Activated T-helper 1 cell treated with anti-CD3 and anti-CD28 coated beads, Interleukin-12 subunit alpha, Interleukin-12 subunit beta, Interleukin-2, Interleukin-4 antibody, amounts not matched to agents 30 ng/mL and 10 ng/mL and 1 ng/mL, durations not matched to agents 14 hours and 24 hours and 36 hours (primary cell): ENCODE measurements at regions of chr6 and their contacts with region 1.

Region 1: GRCh38 chr6:143872201-143872600 is 7.9 kb downstream of the ZC2HC1B start:
- DNase-seq: no peak
- H3K4me3 Mint-ChIP-seq: no peak overlapping the region
- H3K27ac Mint-ChIP-seq: no peak overlapping the region
- H3K4me1 Mint-ChIP-seq: peaks cover 11% of the 10 kb centered on the region
- H3K27me3 Mint-ChIP-seq: no peaks in the 10 kb centered on the region

Region 2: GRCh38 chr6:144008120-144008811 is 136.1 kb after region 1 on chr6 and contains the start of gene PLAGL1:
- intact Hi-C with region 1: loop called (anchors 10 kb)
- DNase-seq: no peak
- H3K4me3 Mint-ChIP-seq: peak within 1 kb of the TSS; percentile 78
- H3K27ac Mint-ChIP-seq: peak within 1 kb of the TSS; percentile 13
- H3K4me1 Mint-ChIP-seq: peaks cover 8% of the 10 kb centered on the region
- H3K27me3 Mint-ChIP-seq: peaks cover 27% of the 10 kb centered on the region
- total RNA-seq, gene PLAGL1: 13.6 and 14.5 TPM in 2 replicates